Activated T-helper 1 cell treated with anti-CD3 and anti-CD28 coated beads, Interleukin-12 subunit alpha, Interleukin-12 subunit beta, Interleukin-2, Interleukin-4 antibody, amounts not matched to agents 30 ng/mL and 10 ng/mL and 1 ng/mL, durations not matched to agents 14 hours and 24 hours and 36 hours (primary cell): ENCODE measurements at regions of chr9 and their contacts with region 1.

Region 1: DNA sequence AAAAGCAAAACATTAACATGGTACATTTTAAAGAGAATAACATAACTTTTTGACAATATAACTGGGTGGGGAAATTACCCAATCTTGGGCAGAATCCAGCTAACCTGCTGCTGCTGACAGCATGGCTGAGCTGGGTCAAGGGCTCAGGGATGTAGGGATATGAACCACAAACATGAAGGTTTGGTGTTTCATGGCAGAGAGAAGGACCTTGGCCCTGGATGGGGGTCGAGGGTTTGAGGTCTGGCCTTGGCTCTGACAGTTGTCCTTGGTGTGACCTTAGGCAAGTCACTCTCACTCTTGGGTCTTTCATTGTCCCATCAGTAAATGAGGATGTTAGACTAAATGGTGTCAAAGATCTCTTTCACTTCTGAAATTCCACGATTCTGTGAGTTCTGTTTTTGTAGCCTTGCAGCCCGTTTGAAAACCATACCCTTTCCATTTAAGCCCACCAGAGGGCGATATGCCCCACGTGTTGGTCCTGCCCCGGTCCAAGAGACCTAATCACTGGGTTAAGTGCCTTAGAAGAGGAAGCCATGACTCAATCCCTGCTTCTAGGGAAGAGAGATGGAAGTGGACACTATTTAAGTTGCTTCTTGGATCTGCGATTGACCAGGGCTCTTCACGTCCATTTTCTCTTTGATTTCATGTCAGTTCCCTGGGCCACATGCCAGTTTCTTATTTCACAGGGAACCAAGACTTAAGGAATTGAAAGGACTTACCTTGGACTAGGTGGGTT is 56.8 kb upstream of the TEX48 start:
- DNase-seq: peak; percentile 70
- H3K4me3 Mint-ChIP-seq: no peak overlapping the region
- H3K27ac Mint-ChIP-seq: peak overlapping the region; percentile 81
- H3K4me1 Mint-ChIP-seq: peaks cover 73% of the 10 kb centered on the region
- H3K27me3 Mint-ChIP-seq: no peaks in the 10 kb centered on the region

Region 2: GRCh38 chr9:114681594-114682332 is 57.0 kb before region 1 on chr9 and contains the start of gene TEX48:
- intact Hi-C with region 1: loop called (anchors 1 kb)
- DNase-seq: peak; percentile 76
- H3K4me3 Mint-ChIP-seq: peak within 1 kb of the TSS; percentile 49
- H3K27ac Mint-ChIP-seq: peak within 1 kb of the TSS; percentile 97
- H3K4me1 Mint-ChIP-seq: peaks cover 81% of the 10 kb centered on the region
- H3K27me3 Mint-ChIP-seq: no peaks in the 10 kb centered on the region
- total RNA-seq, gene TEX48: 1.0 and 1.2 TPM in 2 replicates

Region 3: DNA sequence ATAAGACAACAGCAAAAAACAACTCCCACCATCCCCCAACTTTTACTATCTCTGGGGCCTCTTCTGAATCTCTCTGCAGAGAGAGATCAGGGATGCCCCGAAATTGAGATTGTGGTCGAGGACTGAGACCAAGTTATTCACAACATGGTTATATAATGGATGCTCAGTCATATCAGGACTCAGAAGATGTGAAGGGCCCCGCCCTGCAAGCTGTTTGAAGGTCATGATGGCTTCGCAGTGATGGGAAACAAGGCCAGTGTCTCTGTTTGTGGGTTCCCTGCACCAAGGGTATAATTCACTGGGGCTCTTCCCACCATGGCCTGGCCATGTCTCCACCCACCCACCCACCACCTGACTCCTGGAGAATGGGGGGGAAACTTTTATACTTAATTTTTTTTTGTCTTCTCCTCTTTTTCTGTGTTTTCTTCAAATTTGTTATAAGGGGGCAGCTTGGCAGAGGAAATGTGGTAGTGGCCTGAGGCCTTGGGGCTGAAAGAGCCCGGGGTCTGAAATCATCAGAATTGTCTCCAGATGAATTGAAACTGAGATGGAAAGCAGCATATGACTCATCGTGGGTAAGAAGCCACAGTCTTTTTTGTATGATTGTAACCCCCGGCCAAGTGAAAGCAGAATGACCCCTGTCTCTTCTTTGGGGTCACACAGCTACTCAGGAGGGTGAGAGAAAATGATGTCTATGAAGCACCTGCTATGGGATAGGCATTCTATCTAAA is 41.8 kb before region 1 on chr9:
- intact Hi-C with region 1: loop called (anchors 1 kb)
- DNase-seq: peak; percentile 80
- H3K4me3 Mint-ChIP-seq: peak overlapping the region; percentile 46
- H3K27ac Mint-ChIP-seq: peak overlapping the region; percentile 95
- H3K4me1 Mint-ChIP-seq: peaks cover 92% of the 10 kb centered on the region
- H3K27me3 Mint-ChIP-seq: no peaks in the 10 kb centered on the region

Region 4: DNA sequence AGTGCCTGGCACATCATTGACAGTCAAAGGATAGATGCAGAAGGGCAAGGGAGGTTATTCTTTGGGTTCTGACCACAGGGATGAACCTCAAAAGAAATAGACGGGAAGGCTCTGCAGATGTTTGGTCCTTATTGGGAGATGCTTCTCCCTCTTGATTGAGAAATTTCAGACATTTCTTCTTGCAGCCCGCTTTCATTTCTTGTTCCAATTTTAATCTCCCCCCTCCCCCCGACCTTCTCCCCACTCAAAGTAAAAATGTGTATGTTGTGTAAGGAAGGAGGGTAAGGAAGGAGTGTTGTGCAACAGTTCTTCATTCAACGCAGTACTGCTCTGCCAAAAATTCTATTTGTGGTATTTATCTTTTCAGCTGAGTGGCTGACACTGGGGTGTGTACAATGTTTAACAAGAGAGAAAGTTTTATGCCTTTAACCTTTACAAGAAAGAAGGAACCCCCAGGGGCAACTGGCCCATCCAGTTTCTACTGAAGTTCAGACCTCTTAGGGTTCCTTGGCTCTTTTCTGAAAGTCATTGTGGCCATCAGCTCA is 113.4 kb after region 1 on chr9:
- intact Hi-C with region 1: no loop called
- DNase-seq: no peak
- H3K4me3 Mint-ChIP-seq: no peak overlapping the region
- H3K27ac Mint-ChIP-seq: no peak overlapping the region
- H3K4me1 Mint-ChIP-seq: peaks cover 17% of the 10 kb centered on the region
- H3K27me3 Mint-ChIP-seq: peaks cover 3% of the 10 kb centered on the region

Region 5: GRCh38 chr9:114894801-114895433 is 156.2 kb after region 1 on chr9:
- intact Hi-C with region 1: loop called (anchors 1 kb)
- DNase-seq: peak; percentile 54
- H3K4me3 Mint-ChIP-seq: peak overlapping the region; percentile 16
- H3K27ac Mint-ChIP-seq: peak overlapping the region; percentile 90
- H3K4me1 Mint-ChIP-seq: peaks cover 57% of the 10 kb centered on the region
- H3K27me3 Mint-ChIP-seq: no peaks in the 10 kb centered on the region

Region 6: DNA sequence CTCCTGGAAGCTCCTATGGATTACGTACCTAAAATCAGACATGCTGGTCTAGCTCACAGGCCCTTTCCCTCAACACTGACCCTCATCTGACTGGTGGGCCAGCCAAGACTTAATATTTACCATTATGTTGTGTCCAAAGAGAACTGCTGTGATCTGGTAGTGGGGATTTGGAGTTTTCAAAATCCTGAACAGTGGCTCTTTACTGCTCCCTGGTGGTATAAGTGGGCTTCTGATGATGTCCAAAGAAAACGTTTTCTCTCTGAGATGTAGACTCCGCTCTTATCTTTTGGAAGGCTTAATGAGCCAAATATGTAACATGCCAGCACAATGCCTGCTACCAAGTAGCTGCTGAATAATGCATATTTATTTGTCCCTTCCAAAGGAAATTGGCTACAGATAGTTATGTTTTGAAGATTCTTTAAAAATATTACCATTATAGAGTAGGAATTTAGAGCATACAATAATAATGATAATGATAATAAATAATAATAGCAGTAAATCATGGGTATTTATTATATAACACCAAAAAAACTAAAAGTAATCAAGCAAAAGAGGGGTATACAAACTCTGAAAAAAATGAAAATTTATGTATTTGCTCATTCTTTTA is 785.8 kb after region 1 on chr9:
- intact Hi-C with region 1: loop called (anchors 2 kb)
- DNase-seq: no peak
- H3K4me3 Mint-ChIP-seq: no peak overlapping the region
- H3K27ac Mint-ChIP-seq: no peak overlapping the region
- H3K4me1 Mint-ChIP-seq: no peaks in the 10 kb centered on the region
- H3K27me3 Mint-ChIP-seq: peaks cover 3% of the 10 kb centered on the region